OCI-LY7 (cell line): ENCODE measurements at regions of chr4 and their contacts with region 1.

Region 1: GRCh38 chr4:184538023-184538599 is 63.8 kb upstream of the IRF2 start:
- DNase-seq: peak; percentile 93
- H3K4me3 ChIP-seq: peak overlapping the region; percentile 76
- H3K27ac ChIP-seq: peak overlapping the region; percentile 82
- H3K4me1 ChIP-seq: peaks cover 45% of the 10 kb centered on the region
- CTCF ChIP-seq: peak; percentile 89

Region 2: GRCh38 chr4:184282251-184282713 is 255.8 kb before region 1 on chr4:
- CTCF ChIA-PET with region 1: interaction called, 3 read pairs
- POLR2A ChIA-PET with region 1: interaction called, 45 read pairs
- intact Hi-C with region 1: loop called (anchors 1 kb)
- DNase-seq: peak; percentile 87
- H3K4me3 ChIP-seq: peak overlapping the region; percentile 50
- H3K27ac ChIP-seq: peak overlapping the region; percentile 96
- H3K4me1 ChIP-seq: peaks cover 80% of the 10 kb centered on the region
- CTCF ChIP-seq: peak; percentile 66

Region 3: GRCh38 chr4:184310171-184310567 is 227.9 kb before region 1 on chr4:
- CTCF ChIA-PET with region 1: no interaction called
- POLR2A ChIA-PET with region 1: interaction called, 3 read pairs
- intact Hi-C with region 1: loop called (anchors 1 kb)
- DNase-seq: peak; percentile 73
- H3K4me3 ChIP-seq: no peak overlapping the region
- H3K27ac ChIP-seq: no peak overlapping the region
- H3K4me1 ChIP-seq: peaks cover 56% of the 10 kb centered on the region
- CTCF ChIP-seq: peak; percentile 76

Region 4: GRCh38 chr4:184343502-184344177 is 194.5 kb before region 1 on chr4:
- CTCF ChIA-PET with region 1: interaction called, 3 read pairs
- POLR2A ChIA-PET with region 1: interaction called, 4 read pairs
- intact Hi-C with region 1: loop called (anchors 2 kb)
- DNase-seq: peak; percentile 64
- H3K4me3 ChIP-seq: peak overlapping the region; percentile 61
- H3K27ac ChIP-seq: peak overlapping the region; percentile 26
- H3K4me1 ChIP-seq: peaks cover 66% of the 10 kb centered on the region
- CTCF ChIP-seq: no peak

Region 5: DNA sequence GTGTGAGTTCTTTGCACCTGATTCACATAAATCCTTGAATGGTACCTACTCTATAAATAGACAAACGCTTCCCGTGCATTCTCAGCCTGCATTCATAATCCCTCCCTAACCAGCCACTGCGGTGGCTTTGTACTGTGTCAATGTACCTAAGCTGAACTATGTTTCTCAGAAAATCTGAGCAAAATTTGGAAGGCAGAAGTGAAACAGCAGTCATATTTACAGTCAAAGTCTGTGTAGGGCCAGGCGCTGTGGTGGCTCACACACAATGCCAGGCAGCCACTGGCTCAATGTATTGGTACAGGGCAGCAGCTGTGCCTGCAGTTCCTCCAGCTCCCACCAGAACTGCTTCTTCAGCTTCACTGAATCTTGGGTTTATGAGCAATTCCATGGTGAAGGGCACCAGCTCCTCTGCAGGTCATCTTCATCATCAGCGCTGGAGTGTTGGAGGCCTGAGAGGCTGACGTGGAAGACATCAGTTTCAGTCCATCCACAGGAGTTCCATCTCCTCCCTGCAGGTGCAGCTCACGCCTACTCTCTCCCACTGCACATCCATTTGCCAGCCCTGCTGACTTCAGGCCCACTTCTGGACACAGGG is 31.5 kb before region 1 on chr4:
- CTCF ChIA-PET with region 1: interaction called, 4 read pairs
- POLR2A ChIA-PET with region 1: interaction called, 27 read pairs
- intact Hi-C with region 1: loop called (anchors 1 kb)
- DNase-seq: peak; percentile 85
- H3K4me3 ChIP-seq: no peak overlapping the region
- H3K27ac ChIP-seq: peak overlapping the region; percentile 40
- H3K4me1 ChIP-seq: peaks cover 33% of the 10 kb centered on the region
- CTCF ChIP-seq: peak; percentile 60

Region 6: DNA sequence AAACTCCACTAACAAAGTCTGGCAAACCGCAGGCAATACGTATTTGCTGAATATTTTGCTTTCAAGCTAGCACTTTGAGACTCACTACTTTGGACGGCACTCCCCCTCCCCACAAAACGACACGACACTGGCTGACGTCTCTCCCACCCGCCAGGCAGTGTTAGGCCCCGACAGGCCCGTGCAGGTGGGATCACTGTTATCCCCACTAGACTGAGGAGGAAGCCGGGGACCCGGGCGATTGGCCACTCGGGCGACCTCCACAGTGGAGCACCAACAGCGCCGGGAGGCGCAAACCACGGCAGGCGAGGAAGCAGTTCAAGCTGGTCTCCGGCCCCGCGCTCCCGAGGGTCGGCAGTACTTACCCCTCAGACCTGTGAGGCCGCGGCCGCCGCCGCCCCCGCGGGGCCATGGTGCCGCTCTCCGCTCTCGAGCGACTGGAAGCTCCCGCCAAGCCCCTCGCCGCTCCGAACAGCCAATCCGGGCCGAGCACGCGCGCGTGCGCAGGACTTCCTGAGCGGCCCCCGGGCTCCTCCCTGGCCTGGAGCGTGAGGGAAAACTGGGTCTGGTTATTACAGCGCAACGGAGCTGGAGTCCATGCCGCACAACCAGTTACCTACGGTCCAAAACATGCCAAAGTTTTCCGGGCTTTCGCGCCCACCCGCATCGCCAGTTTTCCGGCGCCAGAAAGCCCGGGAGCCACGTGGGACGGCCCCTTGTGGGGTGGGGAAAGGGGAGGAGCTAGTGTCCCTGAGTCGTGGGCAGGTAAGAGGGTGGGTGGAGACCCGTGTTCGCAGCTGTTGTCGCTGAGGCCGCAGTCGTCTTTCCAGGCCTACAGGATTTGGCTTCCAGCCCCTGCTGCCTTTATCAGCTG is 195.8 kb after region 1 on chr4 and contains the start of gene CENPU:
- CTCF ChIA-PET with region 1: no interaction called
- POLR2A ChIA-PET with region 1: no interaction called
- intact Hi-C with region 1: loop called (anchors 5 kb)
- DNase-seq: peak; percentile 99
- H3K4me3 ChIP-seq: peak within 1 kb of the TSS; percentile 94
- H3K27ac ChIP-seq: peak within 1 kb of the TSS; percentile 84
- H3K4me1 ChIP-seq: peaks cover 30% of the 10 kb centered on the region
- CTCF ChIP-seq: no peak
- total RNA-seq, gene CENPU: 83.9 and 85.1 TPM in 2 replicates